Thyroid gland (tissue), 4 donors: ENCODE measurements at regions of chr11 and their contacts with region 1.

Region 1: DNA sequence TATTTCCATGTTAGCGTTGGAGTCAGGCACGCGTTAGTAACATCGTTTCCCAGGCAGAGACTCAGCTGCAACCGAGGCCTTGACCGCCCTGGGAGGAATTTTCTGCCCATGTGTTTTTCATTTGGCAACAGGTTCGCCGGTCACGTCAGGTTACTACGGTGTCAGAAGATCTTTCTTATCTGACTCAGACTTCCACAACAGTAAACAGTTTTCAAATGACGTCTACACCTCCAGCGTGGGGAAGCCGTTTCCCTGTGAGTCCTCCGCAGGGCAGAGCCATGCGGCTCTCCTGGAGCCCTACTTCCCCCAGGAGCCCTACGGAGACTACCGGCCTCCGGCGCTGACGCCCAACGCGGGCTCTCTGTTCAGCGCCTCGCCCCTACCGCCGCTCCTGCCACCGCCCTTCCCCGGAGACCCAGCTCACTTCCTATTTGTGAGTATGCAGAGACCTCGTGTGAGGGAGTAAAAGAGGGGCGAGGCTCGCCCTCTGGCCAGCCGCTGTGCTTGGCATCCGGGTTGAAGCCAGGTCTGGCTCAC is 14.3 kb upstream of the POU2AF3 start:
- DNase-seq: no peak
- H3K4me3 ChIP-seq: no peak overlapping the region
- H3K27ac ChIP-seq: no peak overlapping the region
- H3K4me1 ChIP-seq: no peaks in the 10 kb centered on the region
- H3K27me3 ChIP-seq: no peaks in the 10 kb centered on the region
- CTCF ChIP-seq: no peak
- POLR2A ChIP-seq: no peak

Region 2: DNA sequence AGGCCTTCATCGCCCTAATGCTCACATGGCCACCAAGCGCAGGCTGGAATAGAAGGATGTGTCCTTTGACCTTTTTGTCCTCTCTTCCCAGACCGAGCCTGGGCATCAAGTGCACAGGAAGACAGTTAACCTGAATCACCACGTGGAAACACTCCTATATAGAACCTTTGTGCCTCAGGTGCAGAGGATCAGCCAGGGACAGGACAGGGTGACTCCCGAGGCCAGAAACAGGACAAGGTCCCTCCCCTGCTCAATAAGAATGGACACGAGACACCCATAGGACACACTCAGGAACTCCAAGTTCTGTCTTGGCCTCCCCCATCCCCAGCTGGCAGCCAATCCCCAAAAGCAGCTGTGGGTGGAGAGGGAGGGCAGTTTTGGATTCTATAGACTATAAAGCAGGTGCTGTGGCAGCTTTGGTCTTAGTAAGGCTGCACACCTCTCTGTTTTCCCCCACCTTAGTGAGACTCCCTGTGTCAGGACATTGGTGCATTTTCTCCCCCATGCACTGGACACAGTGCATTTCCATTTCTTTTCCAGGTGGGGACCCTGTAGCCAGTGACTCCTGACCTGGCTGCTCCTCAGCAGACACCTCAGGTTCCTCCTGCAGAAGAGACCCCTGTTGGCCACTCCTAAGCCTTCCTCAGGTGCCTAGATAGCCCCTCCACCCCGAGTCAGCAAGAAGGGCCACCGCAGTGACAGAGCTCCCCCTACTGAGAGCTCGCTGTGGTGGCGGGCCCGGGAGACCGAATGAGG is 138.7 kb after region 1 on chr11:
- intact Hi-C with region 1: loop called (anchors 5 kb)
- DNase-seq: peak; percentile 72 to 78
- H3K4me3 ChIP-seq: no peak overlapping the region
- H3K27ac ChIP-seq: no peak overlapping the region
- H3K4me1 ChIP-seq: peaks cover 19 to 36% of the 10 kb centered on the region in 2 donors
- H3K27me3 ChIP-seq: no peaks in the 10 kb centered on the region
- CTCF ChIP-seq: peak; percentile 43 to 89 (median 82)
- POLR2A ChIP-seq: no peak

Region 3: GRCh38 chr11:111446404-111447111 is 162.5 kb after region 1 on chr11:
- intact Hi-C with region 1: loop called (anchors 5 kb)
- DNase-seq: peak; percentile 75 to 82
- H3K4me3 ChIP-seq: no peak overlapping the region
- H3K27ac ChIP-seq: no peak overlapping the region
- H3K4me1 ChIP-seq: peaks cover 0 to 4% of the 10 kb centered on the region in 2 donors
- H3K27me3 ChIP-seq: no peaks in the 10 kb centered on the region
- CTCF ChIP-seq: peak; percentile 49 to 99 (median 92)
- POLR2A ChIP-seq: no peak